WTC11 (cell line): ENCODE measurements at regions of chr19 and their contacts with region 1.

Region 1: DNA sequence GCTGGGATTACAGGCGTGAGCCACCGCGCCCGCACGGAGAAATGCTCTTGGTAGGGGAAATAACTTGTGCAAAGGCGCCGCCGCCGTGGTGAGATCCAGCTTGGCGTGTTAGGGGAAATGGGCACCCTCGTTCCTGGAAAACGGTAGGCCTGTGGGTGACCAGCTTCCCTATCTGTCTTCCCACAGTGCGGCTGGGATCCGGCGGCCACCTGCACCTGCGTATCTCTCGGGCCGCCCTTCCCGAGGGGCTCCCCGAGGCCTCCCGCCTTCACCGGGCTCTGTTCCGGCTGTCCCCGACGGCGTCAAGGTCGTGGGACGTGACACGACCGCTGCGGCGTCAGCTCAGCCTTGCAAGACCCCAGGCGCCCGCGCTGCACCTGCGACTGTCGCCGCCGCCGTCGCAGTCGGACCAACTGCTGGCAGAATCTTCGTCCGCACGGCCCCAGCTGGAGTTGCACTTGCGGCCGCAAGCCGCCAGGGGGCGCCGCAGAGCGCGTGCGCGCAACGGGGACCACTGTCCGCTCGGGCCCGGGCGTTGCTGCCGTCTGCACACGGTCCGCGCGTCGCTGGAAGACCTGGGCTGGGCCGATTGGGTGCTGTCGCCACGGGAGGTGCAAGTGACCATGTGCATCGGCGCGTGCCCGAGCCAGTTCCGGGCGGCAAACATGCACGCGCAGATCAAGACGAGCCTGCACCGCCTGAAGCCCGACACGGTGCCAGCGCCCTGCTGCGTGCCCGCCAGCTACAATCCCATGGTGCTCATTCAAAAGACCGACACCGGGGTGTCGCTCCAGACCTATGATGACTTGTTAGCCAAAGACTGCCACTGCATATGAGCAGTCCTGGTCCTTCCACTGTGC is 2.4 kb downstream of the GDF15 start:
- DNase-seq: peak; percentile 90
- ATAC-seq: peak; percentile 69
- H3K4me3 Mint-ChIP-seq: peak overlapping the region; percentile 73
- H3K27ac Mint-ChIP-seq: no peak overlapping the region
- H3K4me1 Mint-ChIP-seq: peaks cover 29% of the 10 kb centered on the region
- H3K27me3 Mint-ChIP-seq: peaks cover 32% of the 10 kb centered on the region
- CTCF ChIP-seq: peak; percentile 100

Region 2: DNA sequence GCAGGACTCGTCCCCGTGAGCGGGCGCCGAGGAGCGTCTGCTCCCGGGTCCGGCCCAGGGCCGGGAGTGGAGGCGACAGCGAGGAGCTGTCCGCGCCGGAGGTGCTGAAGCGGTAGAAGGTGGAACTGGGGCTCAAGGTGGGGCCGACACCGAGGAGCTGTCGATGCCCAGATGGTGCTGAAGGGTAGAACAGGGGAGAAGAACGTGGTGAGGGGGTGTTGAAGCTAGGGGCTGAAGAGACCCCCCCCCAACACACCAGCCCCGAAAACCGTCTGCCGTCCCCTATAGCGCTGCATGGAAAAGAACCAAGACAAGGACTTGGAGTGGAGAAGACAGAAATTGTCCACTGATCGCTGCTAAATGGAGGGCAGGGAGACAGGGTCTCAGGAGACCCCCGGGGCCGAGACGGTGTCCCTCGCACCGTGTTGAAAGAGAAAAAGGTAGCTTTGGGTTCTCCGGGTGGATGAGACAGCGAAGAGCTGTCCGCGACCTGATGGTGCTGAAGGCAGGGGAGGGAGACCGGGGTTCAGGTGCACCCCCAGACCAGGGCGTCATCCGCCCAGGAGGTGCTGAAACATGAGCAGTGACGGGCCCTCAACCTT is 155.0 kb before region 1 on chr19:
- CTCF ChIA-PET with region 1: interaction called, 18 read pairs
- POLR2A ChIA-PET with region 1: no interaction called
- DNase-seq: peak; percentile 93
- ATAC-seq: peak; percentile 79
- H3K4me3 Mint-ChIP-seq: peak overlapping the region; percentile 78
- H3K27ac Mint-ChIP-seq: no peak overlapping the region
- H3K4me1 Mint-ChIP-seq: peaks cover 31% of the 10 kb centered on the region
- H3K27me3 Mint-ChIP-seq: peaks cover 12% of the 10 kb centered on the region
- CTCF ChIP-seq: no peak

Region 3: DNA sequence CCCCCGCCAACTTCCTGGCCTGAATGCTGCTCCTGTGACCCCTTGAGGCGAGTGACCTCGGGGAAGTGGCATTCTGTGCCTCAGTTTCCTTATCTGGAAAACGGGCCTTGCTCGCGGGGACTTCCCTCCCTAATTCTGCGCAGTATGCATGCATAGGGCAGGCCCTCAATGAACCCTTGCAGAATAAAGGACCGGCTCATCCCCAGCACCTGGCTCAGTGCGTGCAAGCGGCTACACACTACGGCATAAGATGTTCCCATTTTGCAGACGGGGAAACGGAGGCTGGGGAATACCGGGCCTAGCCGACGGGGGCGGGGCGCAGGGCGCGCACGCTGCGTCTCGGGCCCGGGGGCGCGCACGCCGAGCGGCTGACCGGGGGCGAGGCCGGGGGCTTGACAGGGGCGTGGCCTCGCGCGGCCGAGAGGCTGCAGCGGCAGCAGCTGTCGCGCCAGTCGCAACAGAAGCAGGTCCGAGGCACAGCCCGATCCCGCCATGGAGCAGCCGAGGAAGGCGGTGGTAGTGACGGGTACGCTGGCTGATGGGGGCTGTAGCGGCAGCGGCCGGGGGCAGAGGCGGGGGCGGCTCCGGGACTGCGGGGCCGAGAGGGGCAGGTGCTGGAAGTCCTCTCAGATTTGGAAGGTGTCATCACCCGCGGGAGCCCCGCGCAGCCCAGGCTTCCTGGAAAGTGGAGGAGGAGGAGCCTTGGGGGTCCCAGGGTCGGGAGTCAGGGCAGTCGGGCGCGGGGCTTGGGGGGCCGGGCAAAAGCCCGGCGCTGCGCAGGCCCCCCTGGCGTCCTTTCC is 47.9 kb before region 1 on chr19 and contains the start of gene PGPEP1:
- CTCF ChIA-PET with region 1: interaction called, 28 read pairs
- POLR2A ChIA-PET with region 1: interaction called, 3 read pairs
- DNase-seq: peak; percentile 81
- ATAC-seq: peak; percentile 44
- H3K4me3 Mint-ChIP-seq: peak within 1 kb of the TSS; percentile 79
- H3K27ac Mint-ChIP-seq: peak within 1 kb of the TSS; percentile 96; the same call in 1 of the 2 replicates
- H3K4me1 Mint-ChIP-seq: peaks cover 43% of the 10 kb centered on the region
- H3K27me3 Mint-ChIP-seq: no peaks in the 10 kb centered on the region
- CTCF ChIP-seq: no peak
- total RNA-seq, gene PGPEP1: 39.2 to 68.1 TPM (median 40.8 TPM) in 3 replicates

Region 4: DNA sequence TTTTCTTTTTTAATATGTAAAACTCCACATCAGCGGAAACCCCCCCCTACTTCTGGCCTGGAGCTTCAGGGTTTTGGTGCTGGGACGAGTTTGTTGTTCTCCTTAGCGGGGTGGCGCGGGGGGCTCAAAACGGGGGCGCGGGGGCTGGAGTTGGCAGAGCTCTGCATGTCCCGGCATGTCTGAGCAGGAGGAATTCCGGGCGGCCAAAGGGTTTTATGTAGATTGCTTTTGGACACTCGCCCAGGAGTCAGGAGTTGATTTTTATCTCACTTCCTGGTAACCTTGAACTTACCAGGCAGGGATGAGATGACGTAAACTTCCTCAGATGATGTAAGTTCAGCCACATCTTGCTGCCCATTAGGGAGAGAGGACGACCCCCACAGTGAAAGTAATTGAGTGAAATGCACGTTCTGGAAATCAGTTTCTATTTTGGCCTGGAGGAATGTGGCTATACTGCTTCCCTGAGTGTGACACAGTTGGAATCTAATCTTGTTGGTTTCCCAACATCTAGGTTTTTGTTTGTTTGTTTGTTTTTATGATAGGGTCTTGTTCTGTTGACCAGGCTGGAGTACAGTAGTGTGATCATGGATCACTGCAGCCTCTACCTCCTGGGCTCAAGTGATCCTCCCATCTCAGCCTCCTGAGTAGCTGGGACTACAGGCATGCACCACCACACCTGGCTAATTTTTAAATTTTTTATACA is 23.4 kb before region 1 on chr19:
- CTCF ChIA-PET with region 1: interaction called, 91 read pairs
- POLR2A ChIA-PET with region 1: interaction called, 4 read pairs
- DNase-seq: peak; percentile 38
- ATAC-seq: no peak
- H3K4me3 Mint-ChIP-seq: no peak overlapping the region
- H3K27ac Mint-ChIP-seq: peak overlapping the region; percentile 97
- H3K4me1 Mint-ChIP-seq: peaks cover 45% of the 10 kb centered on the region
- H3K27me3 Mint-ChIP-seq: no peaks in the 10 kb centered on the region
- CTCF ChIP-seq: no peak

Region 5: GRCh38 chr19:18401580-18402112 is 13.3 kb after region 1 on chr19:
- CTCF ChIA-PET with region 1: interaction called, 43 read pairs
- POLR2A ChIA-PET with region 1: interaction called, 3 read pairs
- DNase-seq: no peak
- ATAC-seq: peak; percentile 87
- H3K4me3 Mint-ChIP-seq: no peak overlapping the region
- H3K27ac Mint-ChIP-seq: no peak overlapping the region
- H3K4me1 Mint-ChIP-seq: peaks cover 8% of the 10 kb centered on the region
- H3K27me3 Mint-ChIP-seq: peaks cover 3% of the 10 kb centered on the region; the same call in 1 of the 2 replicates
- CTCF ChIP-seq: no peak

Region 6: GRCh38 chr19:18469069-18469846 is 80.9 kb after region 1 on chr19:
- CTCF ChIA-PET with region 1: no interaction called
- POLR2A ChIA-PET with region 1: no interaction called
- DNase-seq: peak; percentile 87
- ATAC-seq: peak; percentile 74
- H3K4me3 Mint-ChIP-seq: no peak overlapping the region
- H3K27ac Mint-ChIP-seq: no peak overlapping the region
- H3K4me1 Mint-ChIP-seq: peaks cover 9% of the 10 kb centered on the region
- H3K27me3 Mint-ChIP-seq: no peaks in the 10 kb centered on the region
- CTCF ChIP-seq: peak; percentile 88

Region 7: GRCh38 chr19:18594096-18594823 is 205.9 kb after region 1 on chr19:
- CTCF ChIA-PET with region 1: no interaction called
- POLR2A ChIA-PET with region 1: no interaction called
- DNase-seq: peak; percentile 82
- ATAC-seq: peak; percentile 34
- H3K4me3 Mint-ChIP-seq: peak overlapping the region; percentile 77
- H3K27ac Mint-ChIP-seq: peak overlapping the region; percentile 94
- H3K4me1 Mint-ChIP-seq: peaks cover 53% of the 10 kb centered on the region
- H3K27me3 Mint-ChIP-seq: peaks cover 4% of the 10 kb centered on the region
- CTCF ChIP-seq: peak; percentile 63